ENCODE measurements at regions of chr10 and their contacts with region 1.

Region 1: DNA sequence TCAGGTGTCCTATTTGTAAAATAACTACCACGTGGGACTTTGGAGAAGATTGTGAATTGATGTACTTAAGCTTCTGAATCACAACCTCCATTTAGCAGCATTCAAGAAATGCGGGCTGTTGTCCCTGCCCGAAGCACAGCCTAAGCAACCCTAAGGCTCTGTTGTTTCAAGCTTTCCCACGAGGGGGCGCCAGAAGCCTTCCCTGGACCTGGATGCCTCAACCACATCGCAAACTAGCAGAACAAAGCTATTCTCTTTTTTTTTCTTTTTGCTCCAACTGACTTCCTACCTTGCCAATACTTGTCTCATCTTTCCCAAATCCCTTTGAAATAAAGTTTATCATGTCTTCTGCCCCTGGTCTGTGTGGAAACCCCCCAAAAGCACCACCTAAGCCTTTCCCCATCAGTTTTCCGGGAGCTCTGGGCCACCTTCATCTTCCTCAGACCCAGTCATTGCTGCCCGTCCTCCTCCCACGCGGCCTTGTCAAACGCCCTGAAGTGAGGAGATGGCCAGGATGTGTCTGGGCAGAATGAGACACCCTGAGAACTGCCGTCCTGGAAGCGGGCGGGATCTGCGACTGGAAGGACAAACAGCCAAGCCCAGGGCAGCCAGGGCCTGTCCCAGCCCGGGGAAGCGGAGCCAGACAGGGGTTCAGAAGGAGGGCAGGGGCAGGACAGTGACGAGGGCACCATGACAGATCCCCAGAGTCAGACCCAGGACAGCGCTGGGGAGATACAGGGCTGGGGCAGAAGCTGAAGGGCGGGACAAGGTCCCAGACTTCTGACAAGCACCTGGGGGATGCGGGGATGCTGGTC is 112.7 kb downstream of the SLIT1 start:
- DNase-seq: peak; percentile 78
- H3K4me3 ChIP-seq: no peak overlapping the region
- H3K27ac ChIP-seq: no peak overlapping the region
- H3K4me1 ChIP-seq: no peaks in the 10 kb centered on the region
- H3K27me3 ChIP-seq: no peaks in the 10 kb centered on the region
- CTCF ChIP-seq: peak; percentile 78 to 87 (median 83)
- POLR2A ChIP-seq: no peak

Region 2: DNA sequence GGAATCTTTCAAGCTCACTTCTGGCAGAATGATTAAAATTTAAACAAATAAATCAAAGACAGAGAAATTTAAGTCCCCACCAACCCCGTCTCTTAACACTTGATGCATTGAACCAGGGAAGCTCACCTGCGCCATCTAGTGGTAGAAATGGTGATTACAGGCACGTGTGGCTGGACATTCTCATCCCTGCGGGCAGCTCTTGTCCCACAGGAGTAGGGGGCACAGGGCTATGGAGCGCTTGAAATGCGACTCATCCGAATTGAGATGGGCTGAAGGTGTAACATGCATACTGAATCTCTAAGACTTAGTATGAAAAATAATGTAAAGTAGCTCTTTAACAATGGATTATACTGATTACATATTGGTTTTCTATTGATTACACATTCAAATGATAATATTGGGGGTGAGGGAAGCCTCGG is 137.5 kb after region 1 on chr10:
- intact Hi-C with region 1: loop called (anchors 1 kb)
- DNase-seq: peak; percentile 63
- H3K4me3 ChIP-seq: no peak overlapping the region
- H3K27ac ChIP-seq: no peak overlapping the region
- H3K4me1 ChIP-seq: no peaks in the 10 kb centered on the region
- H3K27me3 ChIP-seq: no peaks in the 10 kb centered on the region
- CTCF ChIP-seq: peak; percentile 88 to 99 (median 92)
- POLR2A ChIP-seq: no peak

Region 3: GRCh38 chr10:98536551-98536950 is 1463.5 kb after region 1 on chr10:
- intact Hi-C with region 1: no loop called
- DNase-seq: peak; percentile 47
- H3K4me3 ChIP-seq: no peak overlapping the region
- H3K27ac ChIP-seq: no peak overlapping the region
- H3K4me1 ChIP-seq: no peaks in the 10 kb centered on the region
- H3K27me3 ChIP-seq: no peaks in the 10 kb centered on the region
- CTCF ChIP-seq: peak in 2 of 4 experiments; percentile 23 to 35
- POLR2A ChIP-seq: no peak

Measured in prostate gland (tissue), 2 donors.